ENCODE measurements at regions of chr16 and their contacts with region 1.

Region 1: GRCh38 chr16:6528217-6528616 is 804.4 kb upstream of the RBFOX1 start:
- DNase-seq: no peak
- ATAC-seq: no peak
- H3K4me3 ChIP-seq: no peak overlapping the region
- H3K27ac ChIP-seq: no peak overlapping the region
- H3K4me1 ChIP-seq: no peaks in the 10 kb centered on the region
- H3K27me3 ChIP-seq: no peaks in the 10 kb centered on the region
- CTCF ChIP-seq: no peak
- POLR2A ChIP-seq: no peak
- RAD21 ChIP-seq: no peak

Region 2: GRCh38 chr16:7675628-7676027 is 1147.4 kb after region 1 on chr16:
- CTCF ChIA-PET with region 1: no interaction called
- POLR2A ChIA-PET with region 1: no interaction called
- dilution Hi-C with region 1: no loop called
- in situ Hi-C with region 1: no loop called
- intact Hi-C with region 1: loop called (anchors 10 kb)
- DNase-seq: no peak
- ATAC-seq: no peak
- H3K4me3 ChIP-seq: no peak overlapping the region
- H3K27ac ChIP-seq: no peak overlapping the region
- H3K4me1 ChIP-seq: no peaks in the 10 kb centered on the region
- H3K27me3 ChIP-seq: no peaks in the 10 kb centered on the region
- CTCF ChIP-seq: no peak
- POLR2A ChIP-seq: no peak
- RAD21 ChIP-seq: no peak